Heart right ventricle (tissue), 16 donors: ENCODE measurements at regions of chr1 and their contacts with region 1.

Region 1: GRCh38 chr1:231847612-231848397 is 221.2 kb downstream of the DISC1 start:
- DNase-seq: peak in 1 of 2 donors; percentile 43
- ATAC-seq: peak in 7 of 8 donors; percentile 51 to 78 (median 71)
- H3K4me3 ChIP-seq: peak overlapping the region; percentile 37 to 62 (median 51)
- H3K27ac ChIP-seq: peak overlapping the region; percentile 36 to 85 (median 76)
- H3K4me1 ChIP-seq: peaks cover 6 to 55% (median 17%) of the 10 kb centered on the region in 9 donors
- H3K27me3 ChIP-seq: no peaks in the 10 kb centered on the region
- CTCF ChIP-seq: no peak

Region 2: GRCh38 chr1:231818337-231818736 is 29.5 kb before region 1 on chr1:
- intact Hi-C with region 1: loop called in 1 of 10 experiments (anchors 2 kb)
- DNase-seq: peak; percentile 19 to 55
- ATAC-seq: peak in 7 of 8 donors; percentile 56 to 97 (median 87)
- H3K4me3 ChIP-seq: no peak overlapping the region
- H3K27ac ChIP-seq: peak overlapping the region in 9 of 10 donors; percentile 31 to 75 (median 60)
- H3K4me1 ChIP-seq: peaks cover 0 to 63% (median 30%) of the 10 kb centered on the region in 9 donors
- H3K27me3 ChIP-seq: no peaks in the 10 kb centered on the region
- CTCF ChIP-seq: no peak